Dorsolateral prefrontal cortex (tissue), 120 donors: ENCODE measurements at regions of chr16 and their contacts with region 1.

Region 1: GRCh38 chr16:73707863-73708262 is 588.8 kb upstream of the PSMD7 start:
- DNase-seq: no peak
- H3K4me3 ChIP-seq: no peak overlapping the region
- H3K27ac ChIP-seq: no peak overlapping the region
- H3K27me3 ChIP-seq: peaks cover 0 to 4% (median 0%) of the 10 kb centered on the region in 45 donors
- CTCF ChIP-seq: no peak

Region 2: GRCh38 chr16:73853968-73854367 is 146.1 kb after region 1 on chr16:
- intact Hi-C with region 1: loop called in 1 of 2 experiments (anchors 2 kb)
- DNase-seq: no peak
- H3K4me3 ChIP-seq: no peak overlapping the region
- H3K27ac ChIP-seq: no peak overlapping the region
- H3K27me3 ChIP-seq: peaks cover 0 to 6% (median 0%) of the 10 kb centered on the region in 45 donors
- CTCF ChIP-seq: no peak